Mammary epithelial cell (primary cell): ENCODE measurements at regions of chr19 and their contacts with region 1.

Region 1: DNA sequence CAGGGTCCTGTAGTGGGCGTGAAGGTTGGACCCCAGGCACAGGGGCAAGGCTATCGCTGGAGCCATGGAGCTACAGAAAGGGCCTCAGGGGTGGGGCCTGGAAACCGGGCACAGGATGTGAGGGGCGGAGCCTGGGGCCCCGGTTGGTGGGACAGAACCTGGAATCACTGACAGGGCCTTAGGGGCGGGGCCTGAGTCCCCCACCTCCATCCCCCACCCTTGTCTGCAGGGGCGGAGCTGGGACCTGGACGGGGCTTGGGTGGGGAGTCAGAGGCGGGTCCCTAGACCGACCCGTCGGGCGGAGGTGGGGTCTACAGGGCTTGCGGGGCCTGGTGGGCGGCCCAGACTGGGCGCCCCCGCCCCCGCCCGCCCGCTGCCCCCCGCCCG is 26.0 kb downstream of the DCAF15 start:
- DNase-seq: no peak
- H3K4me3 ChIP-seq: no peak overlapping the region
- H3K27ac ChIP-seq: no peak overlapping the region
- H3K4me1 ChIP-seq: peaks cover 4% of the 10 kb centered on the region
- H3K27me3 ChIP-seq: no peaks in the 10 kb centered on the region
- CTCF ChIP-seq: no peak

Region 2: DNA sequence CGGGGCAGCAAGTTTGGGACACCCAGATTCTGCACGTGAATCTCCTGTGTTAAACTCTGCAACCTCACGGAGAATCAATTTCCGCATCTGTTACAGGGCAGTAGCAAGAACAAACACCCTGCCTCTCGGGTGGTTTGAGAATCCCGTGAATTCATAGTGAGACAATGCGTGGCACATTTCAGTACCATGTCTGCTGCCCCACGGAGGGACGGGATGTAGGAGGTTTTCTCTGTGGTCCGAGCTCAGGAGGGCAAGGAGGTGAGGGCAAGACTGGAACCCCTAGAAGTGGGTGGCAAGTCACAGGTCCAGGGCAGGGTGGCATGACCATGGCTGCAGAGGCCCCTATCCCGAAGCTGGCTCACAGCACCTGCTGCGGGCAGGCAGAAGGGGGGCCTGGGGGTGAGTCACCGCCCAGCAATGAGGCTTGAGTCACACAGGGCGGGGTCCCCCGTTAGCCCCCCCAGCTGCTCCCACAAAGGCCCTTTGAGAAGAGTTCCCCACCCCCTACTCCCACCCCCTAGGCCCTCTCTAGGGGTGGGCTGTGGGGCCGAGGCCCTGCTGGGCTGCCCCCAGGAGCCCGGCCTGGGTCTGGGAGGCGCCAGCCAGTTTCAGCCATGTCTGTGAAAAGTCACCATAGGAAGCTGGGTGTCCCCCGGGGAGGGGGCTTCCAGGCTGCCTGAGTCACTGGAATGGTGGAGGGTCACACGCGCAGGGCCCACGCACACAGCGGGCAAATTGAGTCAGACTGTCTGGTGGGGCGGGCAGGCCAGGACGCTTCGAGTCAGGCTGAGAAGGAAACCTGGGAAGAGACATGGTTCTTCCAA is 127.2 kb before region 1 on chr19:
- CTCF ChIA-PET with region 1: no interaction called
- dilution Hi-C with region 1: no loop called
- in situ Hi-C with region 1: no loop called
- intact Hi-C with region 1: no loop called
- DNase-seq: peak; percentile 95
- H3K4me3 ChIP-seq: peak overlapping the region; percentile 3 to 33 (median 23)
- H3K27ac ChIP-seq: peak overlapping the region; percentile 100
- H3K4me1 ChIP-seq: peaks cover 61% of the 10 kb centered on the region
- H3K27me3 ChIP-seq: no peaks in the 10 kb centered on the region
- CTCF ChIP-seq: no peak

Region 3: DNA sequence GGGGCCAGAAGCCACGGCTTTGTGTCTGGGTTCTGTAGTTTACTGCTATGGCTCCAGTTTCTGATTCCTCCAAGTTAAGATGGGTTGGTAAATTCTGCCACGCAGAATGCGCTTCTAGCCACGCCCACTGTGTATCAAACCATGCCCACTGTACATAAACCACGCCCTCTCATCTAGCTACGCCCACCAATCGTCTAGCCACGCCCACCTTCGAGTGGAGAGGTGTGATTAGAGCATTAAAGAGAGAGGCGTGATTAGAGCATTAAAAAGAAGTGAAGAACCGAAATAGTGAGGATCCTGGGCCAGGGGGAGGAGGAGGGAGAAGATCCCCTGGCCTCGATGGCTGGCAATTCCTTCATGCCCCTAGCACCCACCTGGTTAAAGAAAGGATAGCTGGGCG is 359.2 kb after region 1 on chr19:
- CTCF ChIA-PET with region 1: interaction called, 11 read pairs
- dilution Hi-C with region 1: no loop called
- in situ Hi-C with region 1: no loop called
- intact Hi-C with region 1: no loop called
- DNase-seq: no peak
- H3K4me3 ChIP-seq: no peak overlapping the region
- H3K27ac ChIP-seq: no peak overlapping the region
- H3K4me1 ChIP-seq: peaks cover 6% of the 10 kb centered on the region
- H3K27me3 ChIP-seq: no peaks in the 10 kb centered on the region
- CTCF ChIP-seq: no peak